ENCODE measurements at regions of chr14 and their contacts with region 1.

Region 1: DNA sequence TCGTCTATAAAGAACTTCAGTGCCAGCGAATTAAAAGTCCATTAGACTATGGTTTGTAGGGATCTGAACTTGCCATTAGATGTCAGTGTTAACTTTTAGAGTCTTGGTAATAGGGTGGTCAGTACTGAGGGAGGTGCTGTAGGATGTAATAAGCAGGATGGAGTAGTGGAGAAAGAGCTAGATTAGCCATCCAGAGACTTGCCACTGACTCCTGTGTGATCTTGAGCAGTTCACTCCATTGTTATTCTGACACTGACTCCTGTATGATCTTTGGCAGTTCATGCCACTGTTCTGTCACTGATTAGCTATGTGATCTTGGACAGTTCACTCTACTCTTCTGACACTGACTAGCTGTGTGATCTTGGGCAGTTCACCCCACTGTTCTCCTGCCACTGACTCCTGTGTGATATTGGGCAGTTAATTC is 133.6 kb downstream of the TTLL5 start:
- DNase-seq: peak in 1 of 2 experiments; percentile 42
- H3K4me3 ChIP-seq: no peak overlapping the region
- H3K4me3 Mint-ChIP-seq: no peak overlapping the region
- H3K27ac Mint-ChIP-seq: no peak overlapping the region
- H3K4me1 ChIP-seq: no peaks in the 10 kb centered on the region
- H3K4me1 Mint-ChIP-seq: peaks cover 5% of the 10 kb centered on the region
- H3K27me3 ChIP-seq: no peaks in the 10 kb centered on the region
- H3K27me3 Mint-ChIP-seq: no peaks in the 10 kb centered on the region
- CTCF ChIP-seq: peak; percentile 28 to 57

Region 2: DNA sequence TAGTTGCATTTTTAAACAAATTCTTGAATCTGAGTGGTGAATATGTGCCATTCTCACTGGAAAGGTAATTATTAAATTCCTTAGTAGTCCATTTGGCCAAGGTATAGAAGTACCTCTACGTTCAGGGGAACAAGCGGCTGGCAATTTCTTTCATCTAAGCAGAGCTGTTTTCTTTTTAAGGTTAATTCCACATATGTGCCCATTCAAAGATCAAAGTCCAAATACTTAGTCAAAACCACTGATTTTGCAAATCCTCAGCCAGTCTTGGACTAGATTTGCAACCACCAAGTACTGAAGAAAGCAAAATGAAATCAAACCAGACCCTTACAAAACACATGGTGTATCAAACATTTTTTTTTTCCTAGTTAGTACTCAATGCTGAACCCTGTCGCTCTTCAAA is 435.5 kb before region 1 on chr14:
- CTCF ChIA-PET with region 1: no interaction called
- POLR2A ChIA-PET with region 1: no interaction called
- intact Hi-C with region 1: no loop called
- DNase-seq: no peak
- H3K4me3 ChIP-seq: no peak overlapping the region
- H3K4me3 Mint-ChIP-seq: no peak overlapping the region
- H3K27ac Mint-ChIP-seq: no peak overlapping the region
- H3K4me1 ChIP-seq: peaks cover 8% of the 10 kb centered on the region; the same call in 1 of the 2 replicates
- H3K4me1 Mint-ChIP-seq: peaks cover 19% of the 10 kb centered on the region
- H3K27me3 ChIP-seq: no peaks in the 10 kb centered on the region
- H3K27me3 Mint-ChIP-seq: no peaks in the 10 kb centered on the region
- CTCF ChIP-seq: no peak

Region 3: GRCh38 chr14:75837151-75837787 is 42.6 kb after region 1 on chr14:
- CTCF ChIA-PET with region 1: no interaction called
- POLR2A ChIA-PET with region 1: no interaction called
- intact Hi-C with region 1: no loop called
- DNase-seq: no peak
- H3K4me3 ChIP-seq: no peak overlapping the region
- H3K4me3 Mint-ChIP-seq: no peak overlapping the region
- H3K27ac Mint-ChIP-seq: no peak overlapping the region
- H3K4me1 ChIP-seq: peaks cover 43% of the 10 kb centered on the region
- H3K4me1 Mint-ChIP-seq: peaks cover 25% of the 10 kb centered on the region
- H3K27me3 ChIP-seq: no peaks in the 10 kb centered on the region
- H3K27me3 Mint-ChIP-seq: no peaks in the 10 kb centered on the region
- CTCF ChIP-seq: no peak

Region 4: DNA sequence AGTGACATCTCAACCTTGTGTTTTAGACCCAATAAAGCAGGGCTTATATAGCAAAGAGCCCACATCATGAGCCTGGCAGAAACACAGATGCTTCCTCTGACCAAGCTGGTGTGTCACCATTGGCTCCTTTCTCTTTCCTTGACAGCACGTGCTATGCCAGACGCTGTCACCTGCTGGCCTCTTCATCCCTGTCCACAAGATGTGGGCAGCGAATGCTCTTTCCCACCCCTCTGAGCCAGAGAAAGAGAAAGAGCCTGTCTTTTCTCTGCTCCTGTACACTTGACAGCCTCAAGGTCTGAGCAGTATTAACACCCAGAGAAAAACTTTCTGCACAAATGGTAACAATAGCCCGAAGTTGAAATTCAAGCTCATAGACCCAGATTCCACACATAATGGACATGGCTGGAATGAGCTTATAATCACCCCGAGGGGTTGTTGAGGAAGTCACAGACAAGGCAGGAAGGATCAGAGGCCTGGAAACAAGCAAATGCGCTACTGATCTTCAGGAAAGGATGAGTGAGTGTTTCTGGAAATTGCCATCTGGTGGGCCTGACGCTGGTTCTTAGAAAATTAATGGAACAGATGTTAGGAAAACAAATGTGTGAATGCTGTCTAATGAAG is 178.3 kb after region 1 on chr14:
- CTCF ChIA-PET with region 1: interaction called, 20 read pairs
- POLR2A ChIA-PET with region 1: no interaction called
- intact Hi-C with region 1: no loop called
- DNase-seq: no peak
- H3K4me3 ChIP-seq: no peak overlapping the region
- H3K4me3 Mint-ChIP-seq: no peak overlapping the region
- H3K27ac Mint-ChIP-seq: no peak overlapping the region
- H3K4me1 ChIP-seq: peaks cover 11% of the 10 kb centered on the region
- H3K4me1 Mint-ChIP-seq: peaks cover 13% of the 10 kb centered on the region
- H3K27me3 ChIP-seq: no peaks in the 10 kb centered on the region
- H3K27me3 Mint-ChIP-seq: no peaks in the 10 kb centered on the region
- CTCF ChIP-seq: no peak

Region 5: GRCh38 chr14:75982266-75983018 is 187.8 kb after region 1 on chr14:
- CTCF ChIA-PET with region 1: interaction called, 94 read pairs
- POLR2A ChIA-PET with region 1: no interaction called
- intact Hi-C with region 1: loop called (anchors 1 kb)
- DNase-seq: peak; percentile 78 to 89
- H3K4me3 ChIP-seq: peak overlapping the region; percentile 56
- H3K4me3 Mint-ChIP-seq: peak overlapping the region; percentile 79
- H3K27ac Mint-ChIP-seq: peak overlapping the region; percentile 39
- H3K4me1 ChIP-seq: peaks cover 8% of the 10 kb centered on the region
- H3K4me1 Mint-ChIP-seq: peaks cover 34% of the 10 kb centered on the region
- H3K27me3 ChIP-seq: no peaks in the 10 kb centered on the region
- H3K27me3 Mint-ChIP-seq: no peaks in the 10 kb centered on the region
- CTCF ChIP-seq: peak; percentile 77 to 78

Region 6: DNA sequence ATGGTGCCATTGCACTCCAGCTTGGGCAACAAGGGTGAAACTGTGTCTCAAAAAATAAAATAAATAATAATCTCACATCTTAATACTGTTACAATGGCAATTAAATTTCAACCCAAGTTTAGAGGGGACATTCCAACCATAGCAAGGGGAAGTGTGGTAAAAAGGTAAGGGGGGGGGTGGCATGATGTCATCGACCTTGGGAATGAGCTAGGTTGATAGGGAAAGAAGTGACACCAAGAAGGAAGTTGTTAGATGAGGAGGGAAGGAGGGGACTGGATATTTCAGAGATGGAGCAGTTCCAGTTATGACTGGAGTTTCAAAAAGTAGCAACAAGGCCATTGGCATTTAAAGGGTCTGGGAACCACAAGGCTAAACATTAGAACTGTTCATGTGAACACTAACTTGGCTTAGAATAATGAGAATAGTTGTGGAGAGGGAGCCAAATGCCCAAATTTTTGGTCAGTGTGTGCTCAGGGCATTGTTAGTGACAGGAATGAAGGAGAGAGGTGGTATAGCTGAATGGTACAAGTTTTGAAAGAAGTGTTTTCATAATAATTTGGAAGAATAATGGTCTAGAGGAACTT is 207.7 kb after region 1 on chr14:
- CTCF ChIA-PET with region 1: no interaction called
- POLR2A ChIA-PET with region 1: no interaction called
- intact Hi-C with region 1: no loop called
- DNase-seq: no peak
- H3K4me3 ChIP-seq: no peak overlapping the region
- H3K4me3 Mint-ChIP-seq: no peak overlapping the region
- H3K27ac Mint-ChIP-seq: no peak overlapping the region
- H3K4me1 ChIP-seq: no peaks in the 10 kb centered on the region
- H3K4me1 Mint-ChIP-seq: no peaks in the 10 kb centered on the region
- H3K27me3 ChIP-seq: no peaks in the 10 kb centered on the region
- H3K27me3 Mint-ChIP-seq: no peaks in the 10 kb centered on the region
- CTCF ChIP-seq: no peak

Region 7: DNA sequence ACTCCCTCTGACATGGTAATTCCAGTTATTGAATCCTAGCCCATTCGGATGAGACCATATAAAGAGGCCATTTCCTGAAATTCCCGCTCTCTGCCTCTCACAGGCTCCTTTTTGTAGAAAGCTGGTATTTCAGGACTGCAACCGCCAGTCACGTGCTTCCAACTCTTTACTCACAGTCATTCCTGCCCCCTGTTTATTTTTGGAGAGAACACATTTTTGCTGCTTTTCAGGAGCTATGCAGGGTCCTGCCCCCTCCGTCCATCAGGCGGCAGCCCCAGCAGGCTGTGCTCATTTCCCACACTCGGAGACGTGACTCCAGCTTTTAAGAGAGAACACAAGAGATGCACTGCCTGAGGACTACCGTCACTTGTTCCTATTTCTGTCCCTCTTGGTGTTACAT is 217.7 kb after region 1 on chr14:
- CTCF ChIA-PET with region 1: no interaction called
- POLR2A ChIA-PET with region 1: no interaction called
- intact Hi-C with region 1: no loop called
- DNase-seq: no peak
- H3K4me3 ChIP-seq: no peak overlapping the region
- H3K4me3 Mint-ChIP-seq: no peak overlapping the region
- H3K27ac Mint-ChIP-seq: no peak overlapping the region
- H3K4me1 ChIP-seq: no peaks in the 10 kb centered on the region
- H3K4me1 Mint-ChIP-seq: no peaks in the 10 kb centered on the region
- H3K27me3 ChIP-seq: no peaks in the 10 kb centered on the region
- H3K27me3 Mint-ChIP-seq: no peaks in the 10 kb centered on the region
- CTCF ChIP-seq: no peak

Measured in Caco-2 (cell line).